ENCODE measurements at regions of chr5 and their contacts with region 1.

Region 1: DNA sequence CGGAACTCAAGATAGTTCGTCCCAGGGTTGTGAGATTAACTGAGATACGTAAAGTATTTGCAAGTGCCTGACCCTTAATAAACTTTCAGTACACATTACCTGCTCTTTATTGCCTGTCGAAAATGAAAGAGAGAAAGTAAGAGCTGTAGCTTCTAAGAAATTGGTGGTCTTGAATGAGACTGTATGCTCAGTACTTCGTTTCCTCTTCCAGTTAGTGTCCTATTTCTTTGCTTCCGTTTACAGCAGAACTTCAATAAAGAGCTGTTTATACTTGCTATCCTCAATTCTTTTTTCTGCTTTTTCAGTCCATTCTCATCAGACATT is 534 bp downstream of the SRFBP1 start:
- DNase-seq: no peak
- H3K4me3 Mint-ChIP-seq: peak overlapping the region; percentile 97
- H3K27ac Mint-ChIP-seq: peak overlapping the region; percentile 95
- H3K4me1 Mint-ChIP-seq: peaks cover 21% of the 10 kb centered on the region
- H3K27me3 Mint-ChIP-seq: peaks cover 4% of the 10 kb centered on the region

Region 2: GRCh38 chr5:122009436-122009835 is 47.1 kb after region 1 on chr5:
- intact Hi-C with region 1: loop called (anchors 1 kb)
- DNase-seq: no peak
- H3K4me3 Mint-ChIP-seq: no peak overlapping the region
- H3K27ac Mint-ChIP-seq: peak overlapping the region; percentile 48
- H3K4me1 Mint-ChIP-seq: peaks cover 13% of the 10 kb centered on the region
- H3K27me3 Mint-ChIP-seq: no peaks in the 10 kb centered on the region

Region 3: GRCh38 chr5:122076664-122077365 is 114.5 kb after region 1 on chr5:
- intact Hi-C with region 1: loop called (anchors 2 kb)
- DNase-seq: peak; percentile 16
- H3K4me3 Mint-ChIP-seq: peak overlapping the region; percentile 80
- H3K27ac Mint-ChIP-seq: no peak overlapping the region
- H3K4me1 Mint-ChIP-seq: peaks cover 11% of the 10 kb centered on the region
- H3K27me3 Mint-ChIP-seq: peaks cover 65% of the 10 kb centered on the region

Region 4: GRCh38 chr5:122774861-122775549 is 812.7 kb after region 1 on chr5 and contains the start of gene SNX2:
- intact Hi-C with region 1: loop called (anchors 5 kb)
- DNase-seq: peak; percentile 79
- H3K4me3 Mint-ChIP-seq: peak within 1 kb of the TSS; percentile 95
- H3K27ac Mint-ChIP-seq: peak within 1 kb of the TSS; percentile 82
- H3K4me1 Mint-ChIP-seq: peaks cover 32% of the 10 kb centered on the region
- H3K27me3 Mint-ChIP-seq: peaks cover 4% of the 10 kb centered on the region
- total RNA-seq, gene SNX2: 30.5 and 35.0 TPM in 2 replicates

Measured in activated T-helper 1 cell treated with anti-CD3 and anti-CD28 coated beads, Interleukin-12 subunit alpha, Interleukin-12 subunit beta, Interleukin-2, Interleukin-4 antibody, amounts not matched to agents 30 ng/mL and 10 ng/mL and 1 ng/mL, durations not matched to agents 14 hours and 24 hours and 36 hours (primary cell).